Activated CD4-positive, alpha-beta T cell treated with anti-CD3 and anti-CD28 coated beads, Interleukin-2, amount 10 ng/mL, durations not matched to agents 24 days and 14 days (primary cell): ENCODE measurements at regions of chr1 and their contacts with region 1.

Region 1: GRCh38 chr1:244353551-244354091 is 98.1 kb downstream of the ADSS2 start:
- DNase-seq: peak; percentile 70
- H3K4me3 Mint-ChIP-seq: no peak overlapping the region
- H3K27ac Mint-ChIP-seq: peak overlapping the region; percentile 73
- H3K4me1 Mint-ChIP-seq: peaks cover 24% of the 10 kb centered on the region
- H3K27me3 Mint-ChIP-seq: no peaks in the 10 kb centered on the region

Region 2: DNA sequence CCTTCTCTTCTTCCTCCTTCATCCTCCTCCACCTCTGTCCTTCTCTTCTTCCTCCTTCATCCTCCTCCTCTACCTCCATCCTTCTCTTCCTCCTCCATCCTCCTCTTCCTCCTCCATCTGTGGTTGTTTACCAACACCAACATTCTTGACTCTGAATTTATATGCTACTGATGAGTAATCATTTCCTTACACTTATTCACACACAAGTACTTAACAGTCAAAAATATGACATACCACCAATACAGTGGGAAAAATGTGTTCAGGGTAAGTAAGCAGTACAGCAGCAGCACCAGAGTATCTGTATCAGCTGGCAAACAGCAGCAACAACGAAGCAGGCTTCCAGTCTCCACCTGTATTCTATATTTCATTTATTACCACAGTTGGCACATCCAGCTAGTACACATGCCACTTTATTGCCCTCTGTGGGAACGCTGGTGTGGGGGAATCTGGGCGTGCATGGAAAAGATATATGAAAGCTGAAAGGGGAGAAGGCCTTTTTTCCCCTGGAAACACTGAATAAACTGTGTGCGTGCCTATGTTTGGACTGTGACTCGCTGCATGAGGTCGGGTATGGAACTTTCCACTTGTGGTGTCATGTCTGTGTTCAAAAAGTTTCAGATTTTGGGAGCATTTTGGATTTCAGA is 82.1 kb after region 1 on chr1:
- intact Hi-C with region 1: loop called (anchors 5 kb)
- DNase-seq: peak; percentile 59
- H3K4me3 Mint-ChIP-seq: peak overlapping the region; percentile 63
- H3K27ac Mint-ChIP-seq: peak overlapping the region; percentile 99
- H3K4me1 Mint-ChIP-seq: peaks cover 36% of the 10 kb centered on the region
- H3K27me3 Mint-ChIP-seq: no peaks in the 10 kb centered on the region